ENCODE measurements at regions of chr10 and their contacts with region 1.

Region 1: DNA sequence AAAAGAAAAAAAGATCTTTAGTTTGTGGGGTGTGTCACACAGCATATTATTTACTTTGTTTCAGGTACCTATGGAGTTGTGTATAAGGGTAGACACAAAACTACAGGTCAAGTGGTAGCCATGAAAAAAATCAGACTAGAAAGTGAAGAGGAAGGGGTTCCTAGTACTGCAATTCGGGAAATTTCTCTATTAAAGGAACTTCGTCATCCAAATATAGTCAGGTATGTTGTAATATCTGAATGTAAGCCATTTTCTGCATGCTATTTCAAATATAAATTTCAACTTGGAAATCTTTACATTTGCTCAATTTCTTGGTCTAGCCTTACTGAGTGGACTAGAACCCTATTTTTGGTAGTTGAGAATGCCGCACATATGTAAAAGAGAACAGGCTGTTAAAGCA is 6.4 kb downstream of the CDK1 start:
- DNase-seq: no peak
- ATAC-seq: no peak
- H3K4me3 ChIP-seq: peak overlapping the region; percentile 18; the same call in 1 of the 2 replicates
- H3K27ac ChIP-seq: no peak overlapping the region; the same call in 1 of the 2 replicates
- H3K4me1 ChIP-seq: peaks cover 6% of the 10 kb centered on the region; the same call in 1 of the 2 replicates
- H3K27me3 ChIP-seq: no peaks in the 10 kb centered on the region
- CTCF ChIP-seq: no peak
- EP300 ChIP-seq: no peak
- POLR2A ChIP-seq: no peak
- RAD21 ChIP-seq: no peak

Region 2: GRCh38 chr10:60798031-60798430 is 13.4 kb after region 1 on chr10:
- CTCF ChIA-PET with region 1: interaction called, 10 read pairs
- POLR2A ChIA-PET with region 1: no interaction called
- RAD21 ChIA-PET with region 1: interaction called, 6 read pairs
- SMC1A ChIA-PET with region 1: interaction called, 43 read pairs
- in situ Hi-C with region 1: no loop called
- intact Hi-C with region 1: no loop called
- DNase-seq: no peak
- ATAC-seq: no peak
- H3K4me3 ChIP-seq: no peak overlapping the region
- H3K27ac ChIP-seq: no peak overlapping the region
- H3K4me1 ChIP-seq: no peaks in the 10 kb centered on the region
- H3K27me3 ChIP-seq: no peaks in the 10 kb centered on the region
- CTCF ChIP-seq: no peak
- EP300 ChIP-seq: no peak
- POLR2A ChIP-seq: no peak
- RAD21 ChIP-seq: no peak